ENCODE measurements at regions of chr17 and their contacts with region 1.

Region 1: GRCh38 chr17:20236578-20237227 is 227.5 kb downstream of the SPECC1 start:
- DNase-seq: no peak
- ATAC-seq: no peak
- H3K4me3 ChIP-seq: no peak overlapping the region
- H3K27ac ChIP-seq: no peak overlapping the region
- H3K4me1 ChIP-seq: no peaks in the 10 kb centered on the region
- H3K27me3 ChIP-seq: no peaks in the 10 kb centered on the region
- CTCF ChIP-seq: no peak

Region 2: GRCh38 chr17:19327039-19327776 is 909.5 kb before region 1 on chr17:
- CTCF ChIA-PET with region 1: no interaction called
- POLR2A ChIA-PET with region 1: no interaction called
- in situ Hi-C with region 1: no loop called
- intact Hi-C with region 1: no loop called
- DNase-seq: no peak
- ATAC-seq: peak; percentile 57
- H3K4me3 ChIP-seq: no peak overlapping the region
- H3K27ac ChIP-seq: no peak overlapping the region
- H3K4me1 ChIP-seq: no peaks in the 10 kb centered on the region
- H3K27me3 ChIP-seq: no peaks in the 10 kb centered on the region
- CTCF ChIP-seq: no peak

Region 3: GRCh38 chr17:19728079-19728495 is 508.6 kb before region 1 on chr17:
- CTCF ChIA-PET with region 1: no interaction called
- POLR2A ChIA-PET with region 1: no interaction called
- in situ Hi-C with region 1: no loop called
- intact Hi-C with region 1: no loop called
- DNase-seq: no peak
- ATAC-seq: peak; percentile 66; the same call in 1 of the 2 replicates
- H3K4me3 ChIP-seq: no peak overlapping the region
- H3K27ac ChIP-seq: no peak overlapping the region
- H3K4me1 ChIP-seq: no peaks in the 10 kb centered on the region; the same call in 1 of the 2 replicates
- H3K27me3 ChIP-seq: no peaks in the 10 kb centered on the region
- CTCF ChIP-seq: no peak

Region 4: DNA sequence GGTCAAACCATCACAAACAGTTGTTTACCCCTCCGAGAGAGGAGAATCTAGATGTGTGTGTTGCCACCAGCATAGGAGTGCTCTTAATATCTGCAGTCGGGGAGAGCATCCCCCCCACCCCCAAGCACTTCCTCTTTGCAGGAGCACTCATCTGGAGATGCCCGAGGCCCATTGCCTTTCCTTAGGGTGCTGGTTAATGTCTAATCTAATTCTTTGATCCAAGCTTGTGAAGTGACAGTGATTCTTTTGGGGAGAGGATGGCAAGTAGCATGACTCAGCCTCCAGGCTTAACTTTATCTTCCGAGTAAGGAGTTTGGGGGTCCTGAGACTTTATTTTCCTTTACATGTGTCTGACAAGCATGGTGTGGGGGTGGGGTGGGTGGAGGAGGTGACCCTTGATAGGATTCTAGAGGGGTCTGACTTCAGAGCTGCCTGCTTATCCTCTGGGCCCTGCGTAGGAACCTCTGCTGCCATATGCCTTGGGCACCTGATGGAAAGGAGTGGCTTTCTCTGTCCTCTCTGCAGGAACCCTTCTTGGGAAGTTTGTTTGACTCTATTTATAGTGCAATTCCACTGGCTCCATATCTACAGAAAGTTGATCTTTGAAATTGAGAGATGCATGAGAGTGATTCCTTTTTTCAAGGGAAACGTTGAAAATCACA is 20.4 kb before region 1 on chr17:
- CTCF ChIA-PET with region 1: no interaction called
- POLR2A ChIA-PET with region 1: interaction called, 10 read pairs
- in situ Hi-C with region 1: no loop called
- intact Hi-C with region 1: no loop called
- DNase-seq: no peak
- ATAC-seq: no peak
- H3K4me3 ChIP-seq: no peak overlapping the region
- H3K27ac ChIP-seq: no peak overlapping the region
- H3K4me1 ChIP-seq: no peaks in the 10 kb centered on the region
- H3K27me3 ChIP-seq: no peaks in the 10 kb centered on the region
- CTCF ChIP-seq: no peak

Region 5: GRCh38 chr17:20300436-20300934 is 63.8 kb after region 1 on chr17:
- CTCF ChIA-PET with region 1: no interaction called
- POLR2A ChIA-PET with region 1: interaction called, 13 read pairs
- in situ Hi-C with region 1: no loop called
- intact Hi-C with region 1: no loop called
- DNase-seq: no peak
- ATAC-seq: no peak
- H3K4me3 ChIP-seq: no peak overlapping the region
- H3K27ac ChIP-seq: no peak overlapping the region
- H3K4me1 ChIP-seq: no peaks in the 10 kb centered on the region
- H3K27me3 ChIP-seq: no peaks in the 10 kb centered on the region
- CTCF ChIP-seq: no peak